Cardiac septum (tissue), 1 donor: ENCODE measurements at regions of chr7 and their contacts with region 1.

Region 1: GRCh38 chr7:49483142-49483541 is 290.3 kb upstream of the VWC2 start:
- DNase-seq: no peak

Region 2: GRCh38 chr7:49635800-49636199 is 152.7 kb after region 1 on chr7:
- intact Hi-C with region 1: loop called (anchors 10 kb)
- DNase-seq: no peak

Region 3: GRCh38 chr7:49776994-49777393 is 293.9 kb after region 1 on chr7:
- intact Hi-C with region 1: loop called (anchors 5 kb)
- DNase-seq: no peak

Region 4: DNA sequence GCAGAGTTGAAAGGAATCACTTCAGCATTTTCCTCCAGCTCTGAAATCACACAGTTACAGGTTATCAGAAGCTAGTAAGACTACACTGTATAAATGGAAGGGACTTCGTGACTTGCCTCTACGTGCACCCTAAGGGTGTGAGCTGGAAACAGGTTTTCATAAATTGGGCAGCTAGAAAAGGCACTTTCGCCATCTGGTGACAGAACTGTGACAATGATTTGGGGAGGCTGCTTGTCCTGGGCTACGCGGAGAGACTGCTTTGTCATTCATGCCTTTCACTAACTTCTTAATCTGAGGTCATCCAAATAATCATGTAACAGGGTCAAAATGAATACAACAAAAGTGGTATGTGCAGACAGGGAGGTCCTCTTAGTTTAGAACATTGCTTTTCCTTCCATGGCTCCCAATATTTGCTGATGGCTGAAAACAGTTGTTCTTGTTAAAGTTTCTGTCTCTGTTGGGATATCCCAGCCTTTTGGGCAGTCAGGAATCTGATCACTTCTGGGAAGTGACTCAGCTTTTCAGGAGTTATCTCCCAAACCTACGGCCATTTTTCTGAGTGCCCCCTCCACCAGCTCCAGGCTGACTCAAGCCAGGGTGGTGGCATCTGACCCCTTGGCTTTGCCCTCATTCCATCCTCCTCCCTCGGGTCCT is 308.1 kb after region 1 on chr7:
- intact Hi-C with region 1: loop called (anchors 2 kb)
- DNase-seq: no peak

Region 5: GRCh38 chr7:49852619-49853462 is 369.7 kb after region 1 on chr7:
- intact Hi-C with region 1: loop called (anchors 5 kb)
- DNase-seq: no peak